ENCODE measurements at regions of chr15 and their contacts with region 1.

Region 1: DNA sequence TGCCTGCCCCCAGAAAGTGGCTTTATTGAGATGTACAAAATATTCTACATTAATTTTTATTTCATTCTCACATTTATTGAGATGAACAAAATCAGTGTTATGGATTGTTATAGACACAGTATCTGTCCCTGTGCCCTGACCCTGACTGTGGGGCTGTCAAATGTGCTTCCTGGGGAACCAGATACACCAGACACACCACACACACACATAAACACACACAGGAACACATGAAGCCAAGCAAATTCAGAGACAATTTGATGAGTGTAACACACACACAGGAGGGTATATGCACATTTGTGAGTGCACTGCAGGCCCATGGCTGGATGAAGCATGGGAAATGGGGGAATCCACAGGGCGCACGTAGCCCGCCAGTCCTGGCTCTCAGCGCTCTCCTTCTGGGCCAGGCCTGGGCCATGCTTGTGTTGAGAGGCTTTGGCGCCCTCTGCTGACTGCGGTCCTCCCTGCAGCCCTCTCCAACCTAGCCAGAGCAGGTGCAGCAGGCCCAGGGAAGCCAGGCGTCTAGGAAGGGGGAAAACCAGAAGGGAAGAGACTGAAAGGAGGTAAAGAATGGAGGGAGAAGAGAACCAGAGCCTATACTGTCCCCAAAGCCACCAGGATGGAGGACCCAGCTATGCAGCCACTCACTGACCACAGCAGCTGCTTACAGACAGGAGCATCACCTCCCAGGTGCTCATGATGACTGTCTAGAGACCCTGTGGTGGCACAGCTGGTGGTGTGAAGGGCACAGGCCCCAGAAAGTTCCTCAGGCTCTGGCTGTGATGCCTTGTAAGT is 18.0 kb upstream of the LOXL1 start:
- DNase-seq: peak; percentile 32
- ATAC-seq: peak; percentile 100
- H3K4me3 ChIP-seq: no peak overlapping the region
- H3K27ac ChIP-seq: no peak overlapping the region
- H3K4me1 ChIP-seq: no peaks in the 10 kb centered on the region
- H3K27me3 ChIP-seq: no peaks in the 10 kb centered on the region
- CTCF ChIP-seq: peak; percentile 78 to 95 (median 94)
- POLR2A ChIP-seq: no peak
- RAD21 ChIP-seq: peak; percentile 82

Region 2: DNA sequence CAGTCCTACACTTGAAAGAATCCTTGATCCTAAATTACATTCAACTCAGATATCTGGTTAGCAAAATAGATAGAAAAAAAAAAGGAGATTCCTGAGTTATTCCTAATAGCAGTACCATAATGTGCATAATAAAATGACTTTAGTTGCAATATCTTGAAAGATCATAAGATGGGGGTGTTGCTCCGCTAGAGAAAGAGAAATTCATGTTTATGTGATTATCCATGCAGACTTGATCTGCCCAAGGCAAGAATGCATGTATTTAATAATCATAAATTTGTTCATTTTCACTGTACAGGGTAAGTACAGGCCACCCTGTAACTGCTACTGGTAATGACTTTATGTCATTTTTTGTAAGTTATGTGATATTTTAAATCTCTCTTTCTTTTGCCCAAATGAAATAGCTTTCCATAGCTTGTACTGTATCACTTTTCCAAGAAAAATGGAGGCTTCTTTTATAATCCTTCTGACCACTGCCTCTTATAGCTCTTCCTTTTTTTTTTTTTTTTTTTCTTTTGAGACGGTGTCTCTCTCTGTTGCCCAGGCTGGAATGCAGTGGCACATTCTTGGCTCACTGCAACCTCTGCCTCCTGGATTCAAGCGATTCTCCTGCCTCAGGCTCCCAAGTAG is 624.0 kb before region 1 on chr15:
- CTCF ChIA-PET with region 1: no interaction called
- POLR2A ChIA-PET with region 1: no interaction called
- RAD21 ChIA-PET with region 1: no interaction called
- intact Hi-C with region 1: loop called (anchors 1 kb)
- DNase-seq: no peak
- ATAC-seq: 0 out of 2 replicates have a peak, but pooled peaks have one; percentile 36
- H3K4me3 ChIP-seq: no peak overlapping the region
- H3K27ac ChIP-seq: no peak overlapping the region
- H3K4me1 ChIP-seq: no peaks in the 10 kb centered on the region
- H3K27me3 ChIP-seq: no peaks in the 10 kb centered on the region
- CTCF ChIP-seq: peak; percentile 14 to 47 (median 30); a peak in 4 of 6 replicates
- POLR2A ChIP-seq: no peak
- RAD21 ChIP-seq: peak; percentile 55

Region 3: DNA sequence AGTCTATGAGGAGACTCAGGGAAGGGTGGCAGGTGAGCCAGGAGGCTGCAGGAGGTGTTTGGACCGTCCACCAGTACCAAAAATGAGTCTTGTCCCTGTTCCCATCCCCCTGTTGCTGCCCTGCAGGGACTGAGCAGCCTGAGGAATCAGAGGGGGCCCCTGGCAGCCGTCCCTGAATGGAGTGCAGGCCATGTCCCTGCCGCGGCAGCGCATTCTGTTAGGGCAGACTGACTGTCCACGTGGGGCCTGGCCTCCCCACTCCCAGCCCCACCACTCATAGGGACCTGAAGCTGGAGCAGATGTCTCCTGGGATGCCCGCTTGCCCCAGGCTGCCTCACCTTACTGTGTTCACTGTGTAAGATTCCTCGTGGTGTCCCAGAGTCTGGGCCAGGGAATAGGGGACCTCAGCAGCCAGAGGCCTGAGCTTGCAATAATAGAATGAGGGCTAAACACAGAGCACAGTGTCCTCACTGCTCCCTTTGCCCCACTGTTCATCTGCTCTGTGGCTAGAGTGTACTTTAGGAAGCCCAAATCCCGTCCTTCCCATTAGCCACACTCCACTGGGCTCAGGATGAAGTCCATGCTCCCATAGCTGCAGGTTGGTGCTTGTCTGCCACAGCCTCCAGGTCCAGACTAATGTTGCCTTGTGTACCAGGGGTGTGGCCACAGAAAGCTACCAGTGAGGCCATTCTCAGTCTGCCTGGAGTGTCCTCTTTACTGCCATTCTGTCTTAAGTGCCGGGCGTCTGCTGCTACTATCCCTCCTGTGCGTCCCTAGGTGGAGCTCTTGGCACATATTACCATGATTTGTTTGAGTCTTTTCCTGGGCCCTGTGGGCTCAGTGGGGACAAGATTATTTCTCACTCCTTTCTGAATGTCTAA is 602.7 kb before region 1 on chr15:
- CTCF ChIA-PET with region 1: no interaction called
- POLR2A ChIA-PET with region 1: no interaction called
- RAD21 ChIA-PET with region 1: no interaction called
- intact Hi-C with region 1: loop called (anchors 5 kb)
- DNase-seq: peak; percentile 61
- ATAC-seq: peak; percentile 98
- H3K4me3 ChIP-seq: no peak overlapping the region
- H3K27ac ChIP-seq: no peak overlapping the region
- H3K4me1 ChIP-seq: no peaks in the 10 kb centered on the region
- H3K27me3 ChIP-seq: no peaks in the 10 kb centered on the region
- CTCF ChIP-seq: peak; percentile 80 to 85 (median 81)
- POLR2A ChIP-seq: no peak
- RAD21 ChIP-seq: peak; percentile 85

Region 4: GRCh38 chr15:73873889-73874511 is 34.2 kb before region 1 on chr15:
- CTCF ChIA-PET with region 1: interaction called, 30 read pairs
- POLR2A ChIA-PET with region 1: no interaction called
- RAD21 ChIA-PET with region 1: no interaction called
- intact Hi-C with region 1: loop called (anchors 1 kb)
- DNase-seq: peak; percentile 54
- ATAC-seq: peak; percentile 61; the same call in 1 of the 2 replicates
- H3K4me3 ChIP-seq: no peak overlapping the region
- H3K27ac ChIP-seq: no peak overlapping the region
- H3K4me1 ChIP-seq: no peaks in the 10 kb centered on the region
- H3K27me3 ChIP-seq: peaks cover 45% of the 10 kb centered on the region; the same call in 1 of the 2 replicates
- CTCF ChIP-seq: peak; percentile 70 to 79 (median 70); a peak in 5 of 6 replicates
- POLR2A ChIP-seq: no peak
- RAD21 ChIP-seq: peak; percentile 67

Region 5: DNA sequence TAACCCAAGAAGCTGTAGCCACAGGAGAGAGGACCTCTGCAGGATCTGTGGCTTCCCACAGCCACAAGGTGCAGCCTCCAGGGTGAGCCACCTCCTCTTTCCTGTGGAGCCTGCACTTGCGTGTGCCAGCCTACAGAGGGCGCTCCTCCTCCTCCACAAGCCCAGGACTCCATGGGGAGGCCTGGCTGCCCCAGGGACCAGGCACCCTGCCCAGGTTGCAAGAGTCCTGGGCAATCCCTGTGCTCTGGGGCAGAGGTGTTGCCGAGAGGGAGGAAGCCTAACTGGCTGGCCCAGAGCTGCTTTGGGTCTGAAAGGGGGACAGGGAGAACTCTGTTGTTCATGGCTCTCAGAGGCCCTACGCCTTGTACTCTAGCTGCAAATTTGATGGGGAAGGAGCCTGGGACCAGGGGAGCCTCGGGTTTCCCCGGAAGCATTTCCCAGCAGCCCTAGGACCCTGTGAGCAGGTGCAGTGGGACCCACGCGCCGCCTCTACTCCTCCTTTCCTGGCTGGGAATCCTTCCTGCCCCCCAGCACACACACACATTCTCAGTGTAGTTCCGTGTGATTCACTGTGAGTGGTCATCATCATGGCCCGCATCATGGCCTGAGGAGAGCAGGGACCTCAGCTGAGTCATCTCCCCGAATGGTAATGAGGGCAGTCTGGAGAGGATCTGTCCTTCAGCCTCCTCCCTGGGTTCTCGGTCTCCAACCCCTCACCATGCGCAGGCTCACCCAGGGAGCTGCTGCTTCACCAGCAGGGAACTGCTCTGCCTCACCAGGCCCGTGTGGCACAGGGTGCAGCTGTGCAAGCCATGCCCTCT is 10.6 kb before region 1 on chr15:
- CTCF ChIA-PET with region 1: interaction called, 12 read pairs
- POLR2A ChIA-PET with region 1: no interaction called
- RAD21 ChIA-PET with region 1: no interaction called
- intact Hi-C with region 1: no loop called
- DNase-seq: peak; percentile 37
- ATAC-seq: peak; percentile 99
- H3K4me3 ChIP-seq: no peak overlapping the region
- H3K27ac ChIP-seq: no peak overlapping the region; the same call in 1 of the 2 replicates
- H3K4me1 ChIP-seq: peaks cover 0 to 10% of the 10 kb centered on the region in 2 experiments; a peak in 1 of 4 replicates
- H3K27me3 ChIP-seq: no peaks in the 10 kb centered on the region
- CTCF ChIP-seq: peak; percentile 93 to 99 (median 98)
- POLR2A ChIP-seq: no peak
- RAD21 ChIP-seq: peak; percentile 72

Region 6: GRCh38 chr15:73918749-73919148 is 10.5 kb after region 1 on chr15:
- CTCF ChIA-PET with region 1: no interaction called
- POLR2A ChIA-PET with region 1: no interaction called
- RAD21 ChIA-PET with region 1: no interaction called
- intact Hi-C with region 1: no loop called
- DNase-seq: no peak
- ATAC-seq: no peak
- H3K4me3 ChIP-seq: no peak overlapping the region
- H3K27ac ChIP-seq: no peak overlapping the region
- H3K4me1 ChIP-seq: peaks cover 2 to 4% of the 10 kb centered on the region in 2 experiments; a peak in 3 of 4 replicates
- H3K27me3 ChIP-seq: no peaks in the 10 kb centered on the region
- CTCF ChIP-seq: no peak
- POLR2A ChIP-seq: no peak
- RAD21 ChIP-seq: no peak

Measured in HCT116 (cell line).